Heart left ventricle (tissue), 16 donors: ENCODE measurements at regions of chr17 and their contacts with region 1.

Region 1: DNA sequence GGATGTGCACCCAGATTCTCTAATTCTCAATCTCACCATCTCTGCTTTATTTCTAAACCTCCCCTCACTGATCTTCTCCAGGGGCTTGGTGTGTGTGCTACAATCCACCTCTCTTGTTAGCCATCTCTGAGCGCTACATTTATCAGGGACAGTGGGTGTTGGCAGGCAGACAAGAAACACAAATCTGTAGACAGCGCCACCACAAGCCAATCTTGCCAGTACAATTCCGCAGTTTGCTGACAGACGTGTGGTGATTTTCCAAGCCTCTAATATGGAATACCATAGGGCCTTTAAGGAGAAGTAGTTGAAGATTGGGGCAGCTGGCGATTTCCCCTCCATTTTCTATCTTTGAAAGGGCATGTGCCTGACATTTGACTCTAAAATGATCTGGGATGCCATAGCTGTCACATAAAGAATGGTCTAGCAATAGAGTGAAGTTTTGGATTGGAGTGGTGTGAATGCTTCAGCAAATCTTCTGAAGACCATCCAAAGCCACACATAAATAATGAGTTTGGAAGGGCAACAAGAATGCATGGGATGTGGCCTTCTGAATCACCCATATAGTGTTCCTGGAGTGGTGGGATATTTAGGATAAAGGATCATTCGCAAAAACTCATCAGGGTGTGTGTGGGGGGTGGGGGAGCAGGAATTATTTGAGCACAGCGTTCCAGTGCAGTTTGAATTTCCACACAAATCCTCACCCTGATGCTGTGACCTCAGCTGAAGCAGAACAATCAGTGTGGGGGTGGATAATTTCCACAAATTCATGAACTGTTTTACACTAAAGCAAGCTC is 12.0 kb upstream of the ANKFN1 start:
- DNase-seq: no peak
- ATAC-seq: no peak
- H3K4me3 ChIP-seq: no peak overlapping the region
- H3K27ac ChIP-seq: no peak overlapping the region
- H3K4me1 ChIP-seq: no peaks in the 10 kb centered on the region
- H3K27me3 ChIP-seq: peaks cover 0 to 3% (median 0%) of the 10 kb centered on the region in 9 donors
- CTCF ChIP-seq: no peak
- POLR2A ChIP-seq: no peak

Region 2: DNA sequence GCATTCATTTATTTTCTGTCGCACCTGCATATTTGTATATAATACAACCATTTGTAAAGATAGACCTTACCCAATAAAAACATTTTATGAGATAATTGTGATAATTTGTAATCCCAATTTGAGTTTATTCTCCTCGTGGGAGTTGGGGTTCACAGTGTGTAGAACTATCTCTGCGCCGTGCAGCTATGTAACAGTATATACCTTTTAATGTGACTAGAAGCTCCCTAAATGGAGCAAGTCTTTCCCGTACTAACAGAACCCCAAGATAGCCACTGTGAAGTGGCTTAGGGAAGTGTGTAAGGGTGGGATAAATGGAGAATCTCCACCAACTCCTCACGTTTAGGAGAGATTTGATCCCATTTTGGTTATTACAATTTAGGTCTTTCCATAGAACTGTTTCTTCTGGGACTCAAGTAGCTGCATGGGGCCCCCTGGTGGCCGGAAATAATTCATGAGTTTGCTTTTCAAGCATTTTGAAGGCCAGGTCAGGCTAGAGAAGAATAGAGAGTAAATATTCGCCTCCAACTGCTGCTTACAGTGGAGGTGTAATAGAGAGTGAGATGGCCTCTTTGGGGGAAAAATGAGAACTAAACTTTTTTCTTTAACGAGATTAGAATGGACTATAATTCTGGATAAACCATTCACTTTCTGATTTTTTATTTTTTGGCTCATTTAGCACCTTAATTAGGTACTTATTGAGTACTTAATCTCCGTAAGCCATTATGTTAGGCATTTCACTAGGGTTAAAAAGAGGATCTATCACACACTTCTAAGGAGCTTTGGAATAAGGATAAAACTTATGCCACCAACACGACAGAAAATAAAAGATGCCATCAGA is 423.1 kb before region 1 on chr17:
- intact Hi-C with region 1: no loop called
- DNase-seq: peak; percentile 63 to 83 (median 68)
- ATAC-seq: peak in 2 of 4 donors; percentile 50 to 52
- H3K4me3 ChIP-seq: no peak overlapping the region
- H3K27ac ChIP-seq: no peak overlapping the region
- H3K4me1 ChIP-seq: peaks cover 0 to 12% (median 4%) of the 10 kb centered on the region in 12 donors
- H3K27me3 ChIP-seq: no peaks in the 10 kb centered on the region
- CTCF ChIP-seq: peak; percentile 70 to 90 (median 82)
- POLR2A ChIP-seq: no peak

Region 3: DNA sequence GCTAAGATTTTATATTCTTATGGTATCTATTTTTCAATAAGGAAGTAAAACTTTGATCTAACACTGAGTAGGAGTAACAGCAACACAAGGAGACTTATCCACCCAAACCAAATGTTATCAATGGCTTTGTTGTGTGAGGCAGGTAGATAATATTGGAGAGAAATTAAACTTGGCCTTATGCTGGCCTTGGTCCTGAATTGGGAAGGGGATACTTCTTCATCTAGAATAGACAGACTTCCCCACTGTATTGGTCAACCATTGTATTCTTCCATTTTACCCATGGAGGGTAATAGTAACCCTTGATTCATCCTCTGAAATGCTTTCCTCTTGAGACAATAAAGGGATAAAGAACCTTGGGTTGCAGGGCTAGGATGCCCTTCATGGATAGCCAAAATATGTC is 64.3 kb before region 1 on chr17:
- intact Hi-C with region 1: loop called in 1 of 10 experiments (anchors 2 kb)
- DNase-seq: no peak
- ATAC-seq: no peak
- H3K4me3 ChIP-seq: no peak overlapping the region
- H3K27ac ChIP-seq: no peak overlapping the region
- H3K4me1 ChIP-seq: no peaks in the 10 kb centered on the region
- H3K27me3 ChIP-seq: peaks cover 0 to 5% (median 0%) of the 10 kb centered on the region in 9 donors
- CTCF ChIP-seq: no peak
- POLR2A ChIP-seq: no peak